ENCODE measurements at regions of chr12 and their contacts with region 1.

Region 1: GRCh38 chr12:100404769-100405407 is 48.0 kb downstream of the SLC17A8 start:
- DNase-seq: peak; percentile 48
- H3K4me3 ChIP-seq: no peak overlapping the region
- H3K27ac ChIP-seq: no peak overlapping the region
- H3K4me1 ChIP-seq: no peaks in the 10 kb centered on the region
- H3K27me3 ChIP-seq: no peaks in the 10 kb centered on the region
- CTCF ChIP-seq: peak; percentile 67 to 73
- POLR2A ChIP-seq: no peak

Region 2: DNA sequence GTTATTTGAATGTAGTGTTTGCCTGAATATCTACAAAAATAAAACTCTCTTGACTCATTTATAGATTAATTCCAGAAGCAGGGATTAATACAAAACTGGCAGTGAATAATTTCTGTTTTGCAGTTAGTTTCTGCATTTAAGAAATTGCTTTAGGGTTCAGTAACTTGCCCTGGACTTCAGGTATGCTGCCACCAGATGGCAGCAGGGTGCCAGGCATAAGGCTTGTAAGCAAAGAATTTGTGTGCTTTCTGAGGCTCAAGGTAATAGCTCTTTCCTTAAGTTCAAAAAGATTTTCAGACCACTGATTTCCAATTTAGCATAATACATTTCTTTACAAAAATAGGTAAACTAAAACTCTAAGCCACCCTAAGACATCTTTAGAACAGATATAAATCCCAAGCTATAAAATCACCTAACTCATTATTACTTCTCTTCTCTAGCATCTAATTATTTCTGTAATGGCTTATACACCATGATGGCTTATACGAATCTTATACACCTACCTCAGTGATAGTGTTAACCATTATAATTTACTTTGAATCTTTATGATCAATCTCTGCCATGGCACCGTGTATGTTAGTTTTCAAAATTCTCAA is 1361.5 kb before region 1 on chr12:
- CTCF ChIA-PET with region 1: interaction called, 22 read pairs
- POLR2A ChIA-PET with region 1: no interaction called
- dilution Hi-C with region 1: no loop called
- intact Hi-C with region 1: no loop called
- DNase-seq: peak; percentile 63
- H3K4me3 ChIP-seq: no peak overlapping the region
- H3K27ac ChIP-seq: no peak overlapping the region
- H3K4me1 ChIP-seq: no peaks in the 10 kb centered on the region
- H3K27me3 ChIP-seq: no peaks in the 10 kb centered on the region
- CTCF ChIP-seq: peak; percentile 64 to 79
- POLR2A ChIP-seq: no peak

Region 3: GRCh38 chr12:100114574-100114973 is 290.3 kb before region 1 on chr12:
- CTCF ChIA-PET with region 1: no interaction called
- POLR2A ChIA-PET with region 1: no interaction called
- dilution Hi-C with region 1: no loop called
- intact Hi-C with region 1: no loop called
- DNase-seq: no peak
- H3K4me3 ChIP-seq: no peak overlapping the region
- H3K27ac ChIP-seq: no peak overlapping the region
- H3K4me1 ChIP-seq: no peaks in the 10 kb centered on the region
- H3K27me3 ChIP-seq: no peaks in the 10 kb centered on the region
- CTCF ChIP-seq: no peak
- POLR2A ChIP-seq: no peak

Region 4: GRCh38 chr12:100154474-100155247 is 250.2 kb before region 1 on chr12:
- CTCF ChIA-PET with region 1: interaction called, 19 read pairs
- POLR2A ChIA-PET with region 1: no interaction called
- dilution Hi-C with region 1: no loop called
- intact Hi-C with region 1: loop called (anchors 10 kb)
- DNase-seq: peak; percentile 51
- H3K4me3 ChIP-seq: no peak overlapping the region
- H3K27ac ChIP-seq: no peak overlapping the region
- H3K4me1 ChIP-seq: no peaks in the 10 kb centered on the region
- H3K27me3 ChIP-seq: no peaks in the 10 kb centered on the region
- CTCF ChIP-seq: peak; percentile 91 to 93
- POLR2A ChIP-seq: no peak

Region 5: DNA sequence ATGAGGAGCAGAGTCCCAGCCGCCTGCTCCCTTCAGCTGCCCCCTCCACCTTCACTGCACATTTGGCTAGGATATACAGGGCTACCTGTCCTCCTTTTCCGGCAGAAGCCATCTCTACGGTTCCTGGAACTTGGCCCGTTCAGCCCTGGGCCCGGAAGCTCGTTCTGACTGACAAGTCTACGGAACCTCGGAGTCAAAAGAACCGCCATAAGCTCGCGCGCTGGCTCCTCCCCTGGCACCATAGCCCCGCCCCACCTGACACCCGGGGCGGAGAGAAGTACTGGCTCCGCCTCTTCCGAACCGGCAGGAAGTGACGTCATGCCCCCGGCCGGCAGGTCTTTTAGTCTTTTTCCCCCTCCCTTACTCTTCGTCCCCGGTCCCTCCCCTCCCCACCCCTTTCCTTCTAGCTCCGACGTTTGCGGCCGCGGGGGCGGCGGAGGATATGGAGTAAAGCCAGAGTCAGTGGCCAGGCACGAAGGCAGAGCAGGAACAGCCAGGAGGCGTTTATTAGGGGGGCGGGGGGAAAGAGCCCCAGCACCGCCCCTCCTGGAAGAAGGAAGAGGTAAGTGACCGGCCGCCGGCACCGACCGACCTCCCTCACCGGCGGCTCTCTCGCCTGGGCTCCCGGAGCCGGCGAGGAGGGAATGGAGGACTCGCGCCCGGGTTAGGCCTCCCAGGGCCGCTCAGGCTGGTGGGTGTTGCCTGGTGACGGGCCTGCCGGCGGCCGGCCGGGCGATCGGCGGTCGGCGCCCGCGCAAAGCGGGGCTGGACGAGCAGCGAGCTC is 137.9 kb before region 1 on chr12 and contains the starts of genes DEPDC4 and SCYL2:
- CTCF ChIA-PET with region 1: interaction called, 20 read pairs
- POLR2A ChIA-PET with region 1: no interaction called
- dilution Hi-C with region 1: no loop called
- intact Hi-C with region 1: no loop called
- DNase-seq: peak; percentile 98
- H3K4me3 ChIP-seq: peak within 1 kb of the TSS; percentile 78 to 97 (median 95)
- H3K27ac ChIP-seq: peak within 1 kb of the TSS; percentile 77
- H3K4me1 ChIP-seq: peaks cover 19% of the 10 kb centered on the region
- H3K27me3 ChIP-seq: no peaks in the 10 kb centered on the region
- CTCF ChIP-seq: no peak
- POLR2A ChIP-seq: peak; percentile 42
- total RNA-seq, gene DEPDC4: 0.44 and 0.66 TPM in 2 replicates
- total RNA-seq, gene SCYL2: 41.4 and 41.6 TPM in 2 replicates

Region 6: GRCh38 chr12:100303831-100304230 is 101.1 kb before region 1 on chr12:
- CTCF ChIA-PET with region 1: no interaction called
- POLR2A ChIA-PET with region 1: no interaction called
- dilution Hi-C with region 1: no loop called
- intact Hi-C with region 1: no loop called
- DNase-seq: no peak
- H3K4me3 ChIP-seq: no peak overlapping the region
- H3K27ac ChIP-seq: no peak overlapping the region
- H3K4me1 ChIP-seq: no peaks in the 10 kb centered on the region
- H3K27me3 ChIP-seq: no peaks in the 10 kb centered on the region
- CTCF ChIP-seq: no peak
- POLR2A ChIP-seq: no peak

Region 7: GRCh38 chr12:100372853-100373645 is 31.8 kb before region 1 on chr12:
- CTCF ChIA-PET with region 1: interaction called, 21 read pairs
- POLR2A ChIA-PET with region 1: no interaction called
- dilution Hi-C with region 1: no loop called
- intact Hi-C with region 1: no loop called
- DNase-seq: no peak
- H3K4me3 ChIP-seq: no peak overlapping the region
- H3K27ac ChIP-seq: no peak overlapping the region
- H3K4me1 ChIP-seq: no peaks in the 10 kb centered on the region
- H3K27me3 ChIP-seq: no peaks in the 10 kb centered on the region
- CTCF ChIP-seq: no peak
- POLR2A ChIP-seq: no peak

Region 8: GRCh38 chr12:100554608-100555077 is 149.8 kb after region 1 on chr12:
- CTCF ChIA-PET with region 1: interaction called, 25 read pairs
- POLR2A ChIA-PET with region 1: no interaction called
- dilution Hi-C with region 1: no loop called
- intact Hi-C with region 1: loop called (anchors 5 kb)
- DNase-seq: peak; percentile 96
- H3K4me3 ChIP-seq: no peak overlapping the region
- H3K27ac ChIP-seq: no peak overlapping the region
- H3K4me1 ChIP-seq: peaks cover 3% of the 10 kb centered on the region
- H3K27me3 ChIP-seq: peaks cover 2% of the 10 kb centered on the region in 2 experiments
- CTCF ChIP-seq: peak; percentile 66
- POLR2A ChIP-seq: no peak